ENCODE measurements at regions of chr10 and their contacts with region 1.

Region 1: DNA sequence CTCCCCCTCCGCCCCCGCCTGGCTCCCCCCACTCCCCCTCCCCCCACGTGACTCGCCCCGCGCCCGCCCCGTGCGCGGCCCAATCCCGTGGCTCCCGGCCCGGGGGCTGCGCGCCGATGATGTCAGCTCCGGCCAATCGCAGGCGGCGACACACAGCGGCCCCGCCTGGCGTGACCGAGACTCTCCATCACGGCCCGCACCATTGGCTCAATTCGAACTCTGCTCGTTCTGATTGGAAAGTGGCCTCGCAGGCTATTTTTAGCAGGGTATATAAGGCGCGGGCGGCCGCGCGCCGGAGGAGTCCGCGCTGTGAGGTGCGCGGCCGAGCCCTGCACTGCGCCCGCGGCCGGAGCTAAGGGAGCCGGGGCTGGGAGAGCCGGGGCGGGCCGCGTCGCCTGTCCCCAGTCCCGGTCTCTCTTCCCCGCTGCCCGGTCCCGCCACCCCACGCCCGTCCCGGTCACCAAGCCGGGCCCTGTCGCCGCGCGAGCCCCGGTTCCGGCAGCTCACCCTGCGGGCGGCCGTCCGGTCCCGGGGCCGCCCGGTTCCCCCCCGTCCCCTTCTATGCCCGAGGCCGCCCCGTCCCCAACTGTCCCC is 345 bp upstream of the KLF6 start:
- DNase-seq: peak; percentile 98 to 99
- H3K4me3 ChIP-seq: peak overlapping the region; percentile 99
- H3K27ac ChIP-seq: peak overlapping the region; percentile 100
- H3K4me1 ChIP-seq: peaks cover 0 to 18% (median 7%) of the 10 kb centered on the region in 4 donors
- H3K27me3 ChIP-seq: no peaks in the 10 kb centered on the region
- CTCF ChIP-seq: no peak

Region 2: GRCh38 chr10:3239066-3239919 is 546.1 kb before region 1 on chr10:
- intact Hi-C with region 1: loop called (anchors 5 kb)
- DNase-seq: peak; percentile 65 to 76
- H3K4me3 ChIP-seq: no peak overlapping the region
- H3K27ac ChIP-seq: no peak overlapping the region
- H3K4me1 ChIP-seq: peaks cover 0 to 15% (median 2%) of the 10 kb centered on the region in 4 donors
- H3K27me3 ChIP-seq: no peaks in the 10 kb centered on the region
- CTCF ChIP-seq: peak; percentile 88 to 95

Region 3: DNA sequence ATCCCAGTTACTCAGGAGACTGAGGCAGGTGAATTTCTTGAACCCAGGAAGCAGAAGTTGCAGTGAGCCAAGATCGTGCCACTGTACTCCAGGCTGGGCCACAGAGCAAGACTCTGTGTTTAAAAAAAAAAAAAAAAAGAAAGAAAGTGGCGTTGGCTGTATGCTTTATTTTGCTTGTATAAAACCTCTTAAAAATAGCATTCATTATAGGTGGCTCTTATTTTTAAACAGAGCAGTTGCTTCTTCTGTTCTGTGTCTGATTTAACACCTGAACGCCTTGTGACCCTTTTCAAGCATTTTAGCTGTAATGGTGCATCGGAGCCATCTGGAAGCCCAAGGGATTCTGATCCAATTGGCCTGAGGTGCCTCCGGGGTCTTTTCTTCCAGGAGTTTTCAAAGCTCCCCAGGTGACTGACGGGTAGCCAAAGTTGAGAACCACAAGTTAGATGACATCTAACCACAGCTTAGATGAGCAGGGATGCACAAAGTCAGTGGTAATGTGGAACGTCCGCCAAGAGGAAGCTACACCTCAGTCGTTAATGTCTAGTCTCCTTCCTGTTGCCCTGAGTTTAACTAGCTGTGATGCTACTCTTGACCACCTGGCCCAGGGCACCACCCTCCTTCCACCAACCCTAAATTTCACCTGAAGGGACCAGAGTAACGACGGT is 274.3 kb after region 1 on chr10:
- intact Hi-C with region 1: loop called (anchors 5 kb)
- DNase-seq: no peak
- H3K4me3 ChIP-seq: no peak overlapping the region
- H3K27ac ChIP-seq: peak overlapping the region; percentile 77 to 87
- H3K4me1 ChIP-seq: peaks cover 0 to 68% (median 43%) of the 10 kb centered on the region in 4 donors
- H3K27me3 ChIP-seq: no peaks in the 10 kb centered on the region
- CTCF ChIP-seq: no peak

Region 4: DNA sequence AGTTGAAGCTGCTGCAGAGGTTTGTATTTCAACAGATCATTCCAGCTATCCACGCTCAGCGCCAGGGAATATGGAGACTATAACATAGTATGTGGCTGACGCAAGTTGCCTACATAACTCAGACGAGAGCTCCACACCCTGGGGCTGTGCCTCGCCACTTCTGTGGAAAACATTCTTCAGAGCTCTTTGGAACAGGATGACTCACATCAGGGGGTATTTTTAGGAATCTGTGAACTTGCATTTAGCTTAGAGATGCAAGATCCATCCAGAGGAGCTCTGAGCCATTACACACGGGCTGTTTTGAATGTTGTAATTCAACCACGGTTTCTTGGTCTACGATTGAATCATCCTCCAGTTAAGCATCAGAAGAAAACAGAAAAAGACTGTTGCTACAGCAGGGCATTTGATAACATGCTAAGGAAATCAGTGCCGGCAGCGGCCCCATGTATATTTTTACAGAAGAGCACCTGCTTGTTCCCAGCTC is 559.2 kb after region 1 on chr10:
- intact Hi-C with region 1: loop called (anchors 10 kb)
- DNase-seq: peak; percentile 88 to 90
- H3K4me3 ChIP-seq: no peak overlapping the region
- H3K27ac ChIP-seq: peak overlapping the region; percentile 72
- H3K4me1 ChIP-seq: peaks cover 0 to 31% (median 19%) of the 10 kb centered on the region in 4 donors
- H3K27me3 ChIP-seq: no peaks in the 10 kb centered on the region
- CTCF ChIP-seq: peak; percentile 31 to 48

Region 5: GRCh38 chr10:4767033-4767814 is 981.9 kb after region 1 on chr10:
- intact Hi-C with region 1: loop called (anchors 10 kb)
- DNase-seq: peak in 1 of 2 donors; percentile 28
- H3K4me3 ChIP-seq: no peak overlapping the region
- H3K27ac ChIP-seq: peak overlapping the region; percentile 21 to 22
- H3K4me1 ChIP-seq: peaks cover 0 to 28% (median 15%) of the 10 kb centered on the region in 4 donors
- H3K27me3 ChIP-seq: no peaks in the 10 kb centered on the region
- CTCF ChIP-seq: peak; percentile 76 to 77